Gastrocnemius medialis (tissue), 4 donors: ENCODE measurements at regions of chr18 and their contacts with region 1.

Region 1: GRCh38 chr18:62425465-62426195 is 97.2 kb upstream of the ZCCHC2 start:
- DNase-seq: peak; percentile 86 to 92
- ATAC-seq: peak; percentile 81 to 82
- H3K4me3 ChIP-seq: peak overlapping the region; percentile 31 to 48 (median 40)
- H3K27ac ChIP-seq: peak overlapping the region; percentile 85 to 97 (median 96)
- H3K4me1 ChIP-seq: peaks cover 23 to 25% of the 10 kb centered on the region in 2 donors
- H3K27me3 ChIP-seq: no peaks in the 10 kb centered on the region
- CTCF ChIP-seq: peak; percentile 88 to 93 (median 90)
- POLR2A ChIP-seq: peak; percentile 45 to 73

Region 2: GRCh38 chr18:62450546-62451406 is 25.1 kb after region 1 on chr18:
- in situ Hi-C with region 1: no loop called
- intact Hi-C with region 1: loop called (anchors 1 kb)
- DNase-seq: peak; percentile 88 to 94
- ATAC-seq: peak; percentile 84 to 87
- H3K4me3 ChIP-seq: peak overlapping the region in 3 of 4 donors; percentile 4 to 34 (median 16)
- H3K27ac ChIP-seq: peak overlapping the region; percentile 81 to 94 (median 91)
- H3K4me1 ChIP-seq: peaks cover 22 to 23% of the 10 kb centered on the region in 2 donors
- H3K27me3 ChIP-seq: no peaks in the 10 kb centered on the region
- CTCF ChIP-seq: no peak
- POLR2A ChIP-seq: no peak

Region 3: GRCh38 chr18:62566199-62566598 is 140.6 kb after region 1 on chr18:
- in situ Hi-C with region 1: loop called in 1 of 4 experiments (anchors 5 kb)
- intact Hi-C with region 1: loop called (anchors 1 kb)
- DNase-seq: peak; percentile 40 to 70
- ATAC-seq: peak; percentile 68 to 91
- H3K4me3 ChIP-seq: no peak overlapping the region
- H3K27ac ChIP-seq: peak overlapping the region in 1 of 4 donors; percentile 19
- H3K4me1 ChIP-seq: no peaks in the 10 kb centered on the region
- H3K27me3 ChIP-seq: no peaks in the 10 kb centered on the region
- CTCF ChIP-seq: peak; percentile 15 to 45 (median 39)
- POLR2A ChIP-seq: no peak

Region 4: GRCh38 chr18:62584241-62585120 is 158.9 kb after region 1 on chr18:
- in situ Hi-C with region 1: loop called in 1 of 4 experiments (anchors 5 kb)
- intact Hi-C with region 1: loop called (anchors 1 kb)
- DNase-seq: peak; percentile 78 to 83
- ATAC-seq: peak; percentile 90 to 95
- H3K4me3 ChIP-seq: peak overlapping the region in 2 of 4 donors; percentile 30 to 35
- H3K27ac ChIP-seq: peak overlapping the region; percentile 63 to 70 (median 64)
- H3K4me1 ChIP-seq: peaks cover 11 to 13% of the 10 kb centered on the region in 2 donors
- H3K27me3 ChIP-seq: no peaks in the 10 kb centered on the region
- CTCF ChIP-seq: peak; percentile 95 to 99 (median 97)
- POLR2A ChIP-seq: no peak

Region 5: DNA sequence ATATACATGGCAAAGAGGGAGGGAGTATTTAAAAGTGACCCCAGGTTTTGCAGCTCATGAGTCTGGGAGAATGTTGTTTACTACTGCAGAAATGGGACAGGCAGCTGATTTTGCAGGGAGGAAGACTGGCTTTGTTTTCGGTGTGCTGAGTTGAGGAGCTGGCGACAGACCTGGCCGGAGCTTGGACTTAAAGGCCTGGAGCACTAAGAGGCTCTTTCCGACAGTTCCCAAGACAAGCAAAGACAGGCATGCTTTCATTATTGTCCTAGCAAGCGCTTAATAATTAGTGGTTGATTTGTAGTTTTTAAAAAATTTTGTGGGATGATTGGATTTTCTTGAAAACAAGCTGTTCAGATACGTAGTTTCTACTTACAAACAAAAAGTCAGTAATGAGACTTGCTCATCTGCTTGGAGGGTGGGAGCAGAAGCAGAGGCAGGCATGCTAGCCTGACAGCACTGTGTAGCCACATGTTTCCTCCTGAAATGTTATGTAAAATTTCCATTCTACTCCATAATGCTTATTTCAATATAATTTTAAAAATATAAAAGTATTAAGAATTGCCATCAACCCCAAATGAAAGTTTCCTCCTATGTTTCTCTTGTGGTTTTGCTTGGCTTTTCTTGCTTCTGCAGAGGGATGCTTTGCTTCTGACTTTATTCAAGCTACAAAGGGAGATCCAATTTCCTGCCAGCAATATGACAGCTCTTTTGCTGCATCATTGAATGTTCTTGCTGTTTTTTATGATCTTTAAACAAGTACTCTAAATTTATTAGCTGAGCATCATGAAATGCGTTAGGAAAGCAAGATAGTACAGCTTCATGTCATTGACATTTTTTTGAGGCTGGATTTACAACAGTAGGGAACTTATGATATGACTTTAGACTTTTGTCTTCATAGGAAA is 365.5 kb after region 1 on chr18:
- in situ Hi-C with region 1: no loop called
- intact Hi-C with region 1: no loop called
- DNase-seq: no peak
- ATAC-seq: no peak
- H3K4me3 ChIP-seq: no peak overlapping the region
- H3K27ac ChIP-seq: no peak overlapping the region
- H3K4me1 ChIP-seq: peaks cover 3 to 24% of the 10 kb centered on the region in 2 donors
- H3K27me3 ChIP-seq: no peaks in the 10 kb centered on the region
- CTCF ChIP-seq: no peak
- POLR2A ChIP-seq: no peak